Aorta (tissue), 5 donors: ENCODE measurements at regions of chr2 and their contacts with region 1.

Region 1: DNA sequence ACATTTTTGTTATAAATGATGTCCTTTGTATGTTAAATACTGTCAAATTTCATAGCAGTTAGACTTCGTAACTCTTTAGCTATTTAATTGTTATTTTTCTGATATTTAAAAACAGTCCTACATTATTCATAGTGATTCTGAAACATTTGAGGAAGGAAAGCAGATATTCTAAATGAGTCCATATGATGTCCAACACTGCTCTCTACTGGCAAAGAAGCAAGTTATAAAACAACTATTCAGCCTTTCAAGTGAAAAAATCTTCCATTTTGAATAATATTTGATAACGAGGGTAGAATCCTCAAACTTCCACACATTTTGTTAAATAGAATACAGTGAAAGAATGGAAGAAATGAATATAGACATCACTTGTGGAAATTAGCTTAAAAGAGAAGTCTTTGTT is 220.8 kb downstream of the GULP1 start:
- DNase-seq: no peak
- ATAC-seq: peak; percentile 70
- H3K4me3 ChIP-seq: no peak overlapping the region
- H3K27ac ChIP-seq: no peak overlapping the region
- H3K4me1 ChIP-seq: peaks cover 0 to 2% of the 10 kb centered on the region in 2 donors
- H3K27me3 ChIP-seq: no peaks in the 10 kb centered on the region

Region 2: GRCh38 chr2:187499941-187500532 is 1012.4 kb before region 1 on chr2:
- intact Hi-C with region 1: loop called in 1 of 2 experiments (anchors 5 kb)
- DNase-seq: peak in 1 of 2 donors; percentile 52
- ATAC-seq: peak; percentile 84
- H3K4me3 ChIP-seq: no peak overlapping the region
- H3K27ac ChIP-seq: no peak overlapping the region
- H3K4me1 ChIP-seq: no peaks in the 10 kb centered on the region
- H3K27me3 ChIP-seq: no peaks in the 10 kb centered on the region

Region 3: DNA sequence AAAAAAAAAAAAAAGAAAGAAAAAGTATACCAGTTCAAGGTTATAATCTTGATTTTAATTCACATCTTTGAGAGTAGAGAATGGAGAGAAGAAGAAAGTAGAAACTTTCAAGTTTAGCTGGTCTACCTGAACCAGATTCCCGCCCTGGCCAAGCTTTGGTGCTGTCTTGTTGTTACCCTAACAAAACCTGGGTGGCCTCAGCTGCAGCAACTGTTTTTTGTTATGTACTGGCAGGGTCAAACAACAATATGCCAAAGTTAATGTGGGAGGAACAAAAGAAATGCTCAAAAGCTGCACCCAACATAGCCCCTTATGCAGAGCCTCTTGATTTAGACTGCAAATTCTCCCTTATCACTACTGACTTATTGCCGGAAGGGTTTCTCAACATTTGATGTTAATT is 792.9 kb before region 1 on chr2:
- intact Hi-C with region 1: loop called in 1 of 2 experiments (anchors 10 kb)
- DNase-seq: no peak
- ATAC-seq: no peak
- H3K4me3 ChIP-seq: no peak overlapping the region
- H3K27ac ChIP-seq: no peak overlapping the region
- H3K4me1 ChIP-seq: no peaks in the 10 kb centered on the region
- H3K27me3 ChIP-seq: no peaks in the 10 kb centered on the region

Region 4: GRCh38 chr2:187959821-187960220 is 552.6 kb before region 1 on chr2:
- intact Hi-C with region 1: loop called in 1 of 2 experiments (anchors 10 kb)
- DNase-seq: no peak
- ATAC-seq: no peak
- H3K4me3 ChIP-seq: no peak overlapping the region
- H3K27ac ChIP-seq: peak overlapping the region; percentile 26 to 43
- H3K4me1 ChIP-seq: peaks cover 0 to 3% of the 10 kb centered on the region in 2 donors
- H3K27me3 ChIP-seq: no peaks in the 10 kb centered on the region

Region 5: DNA sequence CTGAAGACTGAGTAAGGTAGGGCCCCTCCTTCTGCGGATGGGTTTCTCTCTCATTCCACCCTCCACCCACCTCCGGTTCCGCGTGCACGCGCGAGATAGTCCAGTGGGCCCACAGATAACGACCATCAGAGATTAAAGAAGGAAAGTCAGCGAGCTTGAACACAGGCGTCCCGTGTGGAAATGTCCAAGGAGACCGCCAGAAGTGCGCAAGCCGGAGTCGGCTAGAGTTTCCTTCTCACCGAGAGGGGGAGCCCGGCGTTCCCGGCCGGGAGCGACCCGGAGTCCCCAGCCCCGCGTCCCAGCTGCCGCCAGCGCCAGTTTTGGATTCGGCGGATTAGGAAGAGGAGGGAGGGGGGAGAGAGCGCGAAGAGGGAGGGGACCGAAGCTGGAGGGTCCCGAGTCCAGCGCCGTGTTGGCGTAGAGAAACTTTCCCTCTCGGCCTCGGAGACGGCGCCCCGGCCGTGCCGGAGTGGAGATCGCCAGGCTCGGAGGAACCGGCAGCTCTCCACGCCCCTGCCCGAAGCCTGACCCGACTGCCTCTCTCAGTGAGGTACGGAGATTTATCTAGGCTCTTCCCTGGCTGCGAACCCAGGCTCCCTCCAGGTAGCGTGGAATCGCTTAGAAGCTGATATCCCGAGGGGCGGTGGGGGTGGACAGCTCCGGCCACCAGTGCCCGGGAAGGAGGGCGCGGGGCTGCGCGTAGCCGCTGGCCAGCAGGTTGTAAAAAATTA is 220.7 kb before region 1 on chr2 and contains the start of gene GULP1:
- intact Hi-C with region 1: loop called (anchors 2 to 5 kb)
- DNase-seq: peak; percentile 83 to 92
- ATAC-seq: peak; percentile 91
- H3K4me3 ChIP-seq: peak within 1 kb of the TSS; percentile 20 to 81
- H3K27ac ChIP-seq: peak within 1 kb of the TSS; percentile 89 to 95
- H3K4me1 ChIP-seq: peaks cover 0 to 2% of the 10 kb centered on the region in 2 donors
- H3K27me3 ChIP-seq: no peaks in the 10 kb centered on the region
- total RNA-seq, gene GULP1: 68.8 to 74.8 TPM

Region 6: DNA sequence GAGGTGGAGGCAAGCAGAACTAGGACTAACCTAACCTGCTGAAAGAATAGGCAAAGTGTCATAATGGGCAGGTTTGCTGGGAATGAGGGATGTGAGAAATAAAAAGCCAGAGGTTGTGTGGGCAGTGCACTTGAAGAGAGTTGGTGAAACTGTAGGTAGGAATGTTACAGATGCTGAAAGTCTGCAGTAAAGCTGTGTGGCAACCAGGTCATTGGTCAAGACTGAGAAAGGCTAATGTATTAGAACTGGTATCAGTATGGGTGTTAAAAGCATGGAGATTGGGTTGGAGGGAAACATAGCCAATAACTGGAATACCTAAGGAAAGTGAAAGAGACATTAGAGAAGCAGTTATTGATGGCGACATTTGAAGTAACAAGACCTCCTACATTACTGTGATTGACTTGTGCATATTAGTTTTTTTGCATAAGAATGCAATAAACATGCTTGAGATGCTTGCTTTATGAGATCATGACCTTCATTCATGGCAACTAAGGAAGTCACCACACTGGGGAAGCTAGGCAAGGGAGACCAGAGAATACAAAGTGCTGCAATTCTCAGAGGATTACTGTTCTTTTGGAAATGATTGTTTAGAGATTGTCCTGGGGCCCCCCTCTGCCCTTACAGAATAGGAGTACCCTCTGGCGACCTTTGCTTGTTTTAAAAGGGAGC is 209.0 kb before region 1 on chr2:
- intact Hi-C with region 1: no loop called
- DNase-seq: no peak
- ATAC-seq: no peak
- H3K4me3 ChIP-seq: no peak overlapping the region
- H3K27ac ChIP-seq: no peak overlapping the region
- H3K4me1 ChIP-seq: peaks cover 0 to 13% of the 10 kb centered on the region in 2 donors
- H3K27me3 ChIP-seq: no peaks in the 10 kb centered on the region